Dendritic cell treated with granulocyte-macrophage colony-stimulating factor and Interleukin-4, amounts not matched to agents 40 ng/mL and 50 ng/mL, for 4 days (primary cell): ENCODE measurements at regions of chr16 and their contacts with region 1.

Region 1: DNA sequence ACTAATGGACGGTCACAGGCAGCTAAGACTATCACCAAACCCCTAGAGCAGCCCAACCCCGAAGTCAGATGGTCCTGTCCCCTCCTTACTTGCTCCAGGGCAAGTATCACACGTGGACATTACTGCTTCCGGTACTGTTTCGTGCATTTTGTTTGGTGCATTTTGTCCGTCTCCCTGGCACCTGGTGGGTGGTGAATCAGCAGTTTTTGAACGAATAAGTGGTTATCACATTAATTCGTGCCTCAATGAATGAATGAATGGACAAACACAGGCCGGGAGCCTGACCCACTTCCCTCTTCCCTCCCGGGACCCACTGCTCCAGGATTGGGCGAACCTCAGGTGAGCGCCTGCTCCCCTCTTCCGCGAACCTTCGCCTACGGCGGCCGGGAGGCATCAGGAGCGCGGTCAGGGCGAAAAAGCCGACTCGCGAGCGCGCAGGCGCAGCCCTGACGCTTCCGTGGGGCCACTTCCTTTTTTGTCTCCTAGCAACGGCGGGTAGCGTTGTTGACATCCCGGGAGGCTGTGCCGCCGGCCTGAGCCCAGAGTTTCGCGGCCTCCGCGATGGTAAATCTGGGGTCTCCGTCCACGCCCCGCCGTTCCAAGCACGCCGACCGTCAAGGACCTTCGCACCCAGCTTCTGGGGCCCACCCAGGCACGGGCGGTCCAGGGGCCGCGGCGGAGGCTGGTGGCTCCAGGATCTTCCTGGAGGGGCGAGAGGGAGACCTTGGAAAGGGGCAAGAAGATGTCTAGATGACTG is at the start of gene DYNLRB2:
- H3K4me3 Mint-ChIP-seq: peak within 1 kb of the TSS; percentile 79
- H3K27ac Mint-ChIP-seq: peak within 1 kb of the TSS; percentile 89
- H3K4me1 Mint-ChIP-seq: peaks cover 12% of the 10 kb centered on the region
- H3K27me3 Mint-ChIP-seq: peaks cover 20% of the 10 kb centered on the region

Region 2: DNA sequence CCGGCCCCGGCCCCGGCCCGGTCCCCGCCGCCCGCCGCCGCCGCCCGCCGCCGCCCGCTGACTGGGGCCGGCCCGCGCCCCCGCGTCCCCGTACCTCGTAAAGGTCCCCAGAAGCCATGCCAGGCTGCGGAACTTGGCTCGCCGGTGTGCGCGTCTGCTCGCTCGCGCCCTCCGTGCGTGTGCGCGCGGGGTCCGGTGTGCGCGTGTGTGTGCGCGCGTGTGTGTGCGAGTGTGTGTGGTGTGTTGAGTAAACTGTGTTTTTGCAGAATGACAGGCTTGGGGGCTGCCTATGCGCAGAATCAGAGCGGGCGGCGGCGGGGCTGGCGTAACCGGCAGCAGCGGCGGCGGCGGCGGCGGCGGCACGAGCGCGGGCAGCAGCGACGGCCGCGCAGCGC is 263.4 kb after region 1 on chr16:
- intact Hi-C with region 1: loop called (anchors 5 kb)
- H3K4me3 Mint-ChIP-seq: peak overlapping the region; percentile 99
- H3K27ac Mint-ChIP-seq: peak overlapping the region; percentile 85
- H3K4me1 Mint-ChIP-seq: peaks cover 23% of the 10 kb centered on the region
- H3K27me3 Mint-ChIP-seq: peaks cover 18% of the 10 kb centered on the region